RWPE1 (cell line): ENCODE measurements at regions of chr14 and their contacts with region 1.

Region 1: GRCh38 chr14:99755629-99756603 is 37.3 kb upstream of the EML1 start:
- DNase-seq: peak; percentile 34
- H3K27ac ChIP-seq: peak overlapping the region; percentile 77
- CTCF ChIP-seq: no peak

Region 2: DNA sequence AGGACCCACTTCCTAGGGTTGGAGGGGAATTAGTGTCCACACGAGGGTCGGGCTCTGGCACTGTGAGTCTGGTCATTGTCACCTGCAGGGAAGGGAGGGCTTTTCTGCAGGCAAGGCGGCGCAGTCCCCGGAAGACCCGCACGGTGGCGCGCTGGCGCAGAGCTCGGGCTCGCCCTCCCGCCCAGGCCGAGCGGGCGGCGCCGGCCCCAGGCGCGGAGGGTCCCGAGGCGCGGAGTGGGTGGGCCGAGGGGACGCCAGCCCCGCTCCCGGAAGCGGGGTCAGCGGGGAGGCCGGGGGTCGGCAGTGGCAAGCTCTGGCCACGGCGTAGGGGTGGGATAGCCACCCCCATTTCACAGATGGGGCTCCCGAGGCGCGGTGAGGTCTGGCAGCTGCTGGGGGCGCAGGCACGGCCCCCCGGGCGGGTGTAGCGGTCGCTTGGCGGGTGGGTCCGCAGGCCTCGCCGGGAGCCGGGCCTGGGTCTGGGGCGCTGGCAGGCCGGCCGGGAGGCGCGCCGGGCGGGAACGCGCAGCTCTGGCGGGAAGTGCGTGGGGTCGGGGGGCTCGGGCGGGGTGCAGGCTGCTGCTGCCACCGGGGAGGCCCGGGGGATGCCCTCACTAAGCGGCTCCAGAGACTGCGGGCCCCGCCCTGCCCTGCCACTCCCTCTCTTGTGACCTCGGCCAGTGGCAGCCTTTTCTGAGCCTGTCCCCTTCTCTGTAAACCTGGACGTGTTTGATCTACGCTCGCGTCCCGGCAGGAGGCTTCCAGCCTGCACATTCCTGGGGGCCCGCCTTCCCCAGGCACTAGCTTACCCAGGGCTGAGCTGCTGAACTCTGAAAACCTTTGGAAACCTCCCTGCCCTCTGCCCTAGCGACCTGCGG is 25.7 kb before region 1 on chr14:
- CTCF ChIA-PET with region 1: interaction called, 13 read pairs
- POLR2A ChIA-PET with region 1: no interaction called
- DNase-seq: peak; percentile 60
- H3K27ac ChIP-seq: no peak overlapping the region
- CTCF ChIP-seq: peak; percentile 88